CD4-positive, alpha-beta memory T cell (primary cell): ENCODE measurements at regions of chr12 and their contacts with region 1.

Region 1: GRCh38 chr12:50167041-50167828 is at the start of gene CERS5:
- DNase-seq: peak; percentile 97 to 98 (median 97)
- H3K4me3 ChIP-seq: peak within 1 kb of the TSS; percentile 72 to 81
- H3K4me3 Mint-ChIP-seq: peak within 1 kb of the TSS; percentile 93 to 96 (median 94)
- H3K27ac ChIP-seq: peak within 1 kb of the TSS; percentile 90
- H3K27ac Mint-ChIP-seq: peak within 1 kb of the TSS; percentile 88 to 98 (median 96)
- H3K4me1 ChIP-seq: peaks cover 30% of the 10 kb centered on the region
- H3K4me1 Mint-ChIP-seq: peaks cover 19 to 34% (median 26%) of the 10 kb centered on the region in 4 donors
- H3K27me3 ChIP-seq: no peaks in the 10 kb centered on the region
- H3K27me3 Mint-ChIP-seq: no peaks in the 10 kb centered on the region
- total RNA-seq, gene CERS5: 42.1 to 48.2 TPM

Region 2: GRCh38 chr12:49730568-49731101 is 436.6 kb before region 1 on chr12:
- CTCF ChIA-PET with region 1: no interaction called
- POLR2A ChIA-PET with region 1: no interaction called
- intact Hi-C with region 1: no loop called
- DNase-seq: no peak
- H3K4me3 ChIP-seq: no peak overlapping the region
- H3K4me3 Mint-ChIP-seq: no peak overlapping the region
- H3K27ac ChIP-seq: no peak overlapping the region
- H3K27ac Mint-ChIP-seq: no peak overlapping the region
- H3K4me1 ChIP-seq: no peaks in the 10 kb centered on the region
- H3K4me1 Mint-ChIP-seq: no peaks in the 10 kb centered on the region
- H3K27me3 ChIP-seq: no peaks in the 10 kb centered on the region
- H3K27me3 Mint-ChIP-seq: peaks cover 4 to 7% of the 10 kb centered on the region in 2 donors

Region 3: DNA sequence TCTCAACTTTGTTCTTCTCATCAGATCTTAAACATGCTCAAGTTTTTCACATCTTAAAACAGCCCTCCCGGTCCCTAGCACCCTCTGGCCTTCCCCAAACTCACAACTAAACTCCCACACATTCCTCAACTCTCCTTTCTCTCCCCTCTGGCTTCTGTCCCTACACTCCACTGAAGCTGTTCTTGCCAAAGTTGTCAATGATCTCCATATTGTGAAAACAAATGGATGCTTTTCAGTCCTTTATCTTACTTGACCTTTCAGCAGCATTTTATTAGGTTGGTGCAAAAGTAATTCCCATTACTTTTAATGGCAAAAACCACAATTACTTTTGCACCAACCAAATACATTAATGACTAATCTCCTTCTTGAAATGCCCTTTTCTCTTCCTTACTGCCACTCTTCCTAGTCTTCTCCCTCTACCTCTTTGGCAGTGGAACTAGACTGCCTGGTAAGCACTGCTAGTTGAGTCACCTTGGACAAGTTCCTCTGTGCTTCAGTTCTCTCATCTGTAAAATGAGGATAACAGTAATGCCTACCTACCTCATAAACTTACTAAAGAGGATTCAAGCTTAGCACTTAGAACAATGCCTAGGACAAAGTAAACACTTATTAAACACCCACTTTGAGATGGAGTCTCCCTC is 16.1 kb before region 1 on chr12:
- CTCF ChIA-PET with region 1: interaction called, 3 read pairs
- POLR2A ChIA-PET with region 1: interaction called, 10 read pairs
- intact Hi-C with region 1: no loop called
- DNase-seq: no peak
- H3K4me3 ChIP-seq: no peak overlapping the region
- H3K4me3 Mint-ChIP-seq: no peak overlapping the region
- H3K27ac ChIP-seq: no peak overlapping the region
- H3K27ac Mint-ChIP-seq: peak overlapping the region in 5 of 7 donors; percentile 5 to 71 (median 63)
- H3K4me1 ChIP-seq: peaks cover 6% of the 10 kb centered on the region
- H3K4me1 Mint-ChIP-seq: peaks cover 16 to 22% (median 19%) of the 10 kb centered on the region in 4 donors
- H3K27me3 ChIP-seq: no peaks in the 10 kb centered on the region
- H3K27me3 Mint-ChIP-seq: no peaks in the 10 kb centered on the region